T-cell (primary cell): ENCODE measurements at regions of chr20 and their contacts with region 1.

Region 1: DNA sequence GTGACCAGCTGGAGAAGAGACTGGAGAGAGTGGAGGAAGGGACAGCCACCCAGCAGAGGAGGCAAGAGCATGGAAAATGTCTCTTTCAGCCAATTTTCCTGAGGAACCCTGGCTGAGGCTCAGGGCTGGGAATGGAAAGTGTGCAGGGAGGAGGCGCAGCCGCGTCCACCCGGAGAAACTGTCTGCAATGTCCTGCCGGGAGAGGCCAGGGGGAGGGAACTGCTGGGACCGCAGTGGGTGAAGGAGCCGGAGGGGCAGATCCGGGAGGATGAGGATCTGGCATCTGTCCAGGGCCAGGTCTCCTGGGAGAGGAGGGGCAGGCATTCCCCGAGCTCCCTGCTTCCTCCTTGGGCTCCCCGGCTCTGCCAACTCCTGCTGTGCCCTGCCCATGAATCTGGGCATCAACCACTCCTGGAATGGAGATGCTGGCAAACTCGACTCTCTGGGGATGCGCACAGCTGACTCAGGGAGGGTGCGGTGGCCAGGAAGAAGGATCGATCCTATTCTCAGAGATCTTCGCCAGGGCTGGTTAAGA is 17.4 kb upstream of the HM13 start:
- DNase-seq: no peak
- ATAC-seq: no peak
- H3K4me3 ChIP-seq: no peak overlapping the region
- H3K4me3 Mint-ChIP-seq: no peak overlapping the region
- H3K27ac ChIP-seq: no peak overlapping the region
- H3K27ac Mint-ChIP-seq: no peak overlapping the region
- H3K4me1 ChIP-seq: no peaks in the 10 kb centered on the region
- H3K4me1 Mint-ChIP-seq: no peaks in the 10 kb centered on the region
- H3K27me3 ChIP-seq: peaks cover 0 to 20% of the 10 kb centered on the region in 2 experiments
- H3K27me3 Mint-ChIP-seq: peaks cover 18 to 20% of the 10 kb centered on the region in 2 donors

Region 2: GRCh38 chr20:31454365-31454764 is 42.5 kb before region 1 on chr20:
- CTCF ChIA-PET with region 1: interaction called, 4 to 22 read pairs
- POLR2A ChIA-PET with region 1: no interaction called
- DNase-seq: no peak
- ATAC-seq: no peak
- H3K4me3 ChIP-seq: no peak overlapping the region
- H3K4me3 Mint-ChIP-seq: no peak overlapping the region
- H3K27ac ChIP-seq: no peak overlapping the region
- H3K27ac Mint-ChIP-seq: no peak overlapping the region
- H3K4me1 ChIP-seq: no peaks in the 10 kb centered on the region
- H3K4me1 Mint-ChIP-seq: no peaks in the 10 kb centered on the region
- H3K27me3 ChIP-seq: peaks cover under 1 to 24% of the 10 kb centered on the region in 2 experiments
- H3K27me3 Mint-ChIP-seq: peaks cover 15 to 21% of the 10 kb centered on the region in 2 donors

Region 3: DNA sequence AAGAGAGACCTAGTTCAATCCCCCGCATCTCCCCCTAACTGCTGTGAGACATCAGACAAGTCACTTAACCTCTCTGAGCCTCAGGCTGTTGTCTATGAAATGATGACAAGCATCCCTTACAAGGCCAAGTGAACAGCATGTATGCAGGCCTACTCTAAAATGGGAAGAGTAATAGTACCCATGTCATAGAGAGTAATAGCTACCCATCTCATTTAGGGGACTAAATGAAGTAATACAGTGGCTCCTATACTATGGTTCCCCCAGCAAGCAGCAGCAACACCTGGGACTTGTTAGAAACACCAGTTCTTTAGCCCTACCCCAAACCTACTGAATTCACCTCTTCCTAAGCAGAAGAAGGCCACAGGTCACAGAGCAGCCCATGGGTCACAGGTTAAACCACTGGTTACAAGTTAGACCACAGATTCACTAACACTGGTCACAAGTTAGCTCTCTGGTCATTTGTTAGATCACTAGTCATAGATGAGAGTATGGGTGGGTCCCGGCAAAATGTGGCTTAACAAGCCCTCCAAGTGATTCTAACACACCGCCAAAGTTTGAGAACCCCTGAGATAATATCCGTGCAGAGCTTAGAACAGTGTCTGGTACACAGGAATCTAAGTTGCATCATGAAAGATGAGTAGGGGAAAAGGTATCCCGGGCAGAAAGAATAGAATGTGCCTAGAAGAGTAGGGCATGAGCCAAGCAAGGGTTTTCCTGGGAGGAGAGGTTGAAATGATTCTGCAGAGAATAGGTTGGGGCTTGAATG is 23.3 kb before region 1 on chr20:
- CTCF ChIA-PET with region 1: no interaction called
- POLR2A ChIA-PET with region 1: no interaction called
- DNase-seq: no peak
- ATAC-seq: no peak
- H3K4me3 ChIP-seq: no peak overlapping the region
- H3K4me3 Mint-ChIP-seq: no peak overlapping the region
- H3K27ac ChIP-seq: no peak overlapping the region
- H3K27ac Mint-ChIP-seq: no peak overlapping the region
- H3K4me1 ChIP-seq: peaks cover 0 to 8% of the 10 kb centered on the region in 2 experiments
- H3K4me1 Mint-ChIP-seq: peaks cover 6 to 12% (median 7%) of the 10 kb centered on the region in 3 donors
- H3K27me3 ChIP-seq: peaks cover 7 to 35% of the 10 kb centered on the region in 2 experiments
- H3K27me3 Mint-ChIP-seq: peaks cover 42 to 52% of the 10 kb centered on the region in 2 donors